Activated CD4-positive, alpha-beta T cell treated with anti-CD3 and anti-CD28 coated beads, Interleukin-2, amount 10 ng/mL, durations not matched to agents 7 days and 5 days (primary cell): ENCODE measurements at regions of chr10 and their contacts with region 1.

Region 1: DNA sequence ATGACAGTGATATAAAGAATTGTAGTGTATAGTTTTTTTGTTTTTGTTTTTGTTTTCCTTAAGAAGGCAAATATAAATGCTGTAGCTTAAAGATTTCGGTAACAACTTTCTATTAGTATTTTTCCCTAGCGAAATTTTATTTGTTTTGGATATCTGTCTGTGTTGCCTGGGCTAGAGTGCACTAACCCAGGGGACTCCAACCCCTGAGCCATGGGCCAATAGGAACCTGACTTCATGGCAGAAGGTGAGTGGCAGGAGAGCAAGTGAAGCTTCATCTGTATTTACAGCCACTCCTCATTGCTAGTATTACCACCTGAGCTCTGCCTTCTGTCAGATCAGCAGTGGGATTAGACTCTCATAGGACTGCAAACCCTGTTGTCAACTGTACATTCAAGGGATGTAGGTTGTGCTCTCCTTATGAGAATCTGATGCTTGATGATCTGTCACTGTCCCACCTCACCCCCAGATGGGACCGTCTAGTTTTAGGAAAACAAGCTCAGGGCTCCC is 65.4 kb upstream of the CCAR1 start:
- DNase-seq: no peak
- H3K4me3 Mint-ChIP-seq: no peak overlapping the region
- H3K27ac Mint-ChIP-seq: no peak overlapping the region
- H3K4me1 Mint-ChIP-seq: no peaks in the 10 kb centered on the region
- H3K27me3 Mint-ChIP-seq: no peaks in the 10 kb centered on the region

Region 2: DNA sequence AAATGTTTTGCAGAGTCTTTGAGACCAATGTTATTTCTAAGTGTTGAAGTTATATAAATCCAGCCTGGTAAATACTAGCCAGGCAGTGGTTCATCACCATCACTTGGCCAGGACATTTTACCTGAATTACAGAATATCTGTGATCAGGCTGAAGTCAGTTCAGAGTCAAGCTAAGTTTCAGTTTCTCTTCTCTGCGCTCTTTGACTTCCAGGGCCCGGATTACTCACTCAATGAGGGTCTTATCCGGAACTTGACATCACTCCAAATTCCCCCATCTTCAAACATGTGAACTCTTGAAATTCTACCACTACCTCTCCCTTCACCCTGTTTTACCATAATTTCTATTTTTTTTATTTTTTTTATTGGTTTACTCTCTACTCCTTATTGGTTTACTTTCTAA is 28.7 kb after region 1 on chr10:
- CTCF ChIA-PET with region 1: no interaction called
- POLR2A ChIA-PET with region 1: no interaction called
- DNase-seq: no peak
- H3K4me3 Mint-ChIP-seq: no peak overlapping the region
- H3K27ac Mint-ChIP-seq: peak overlapping the region; percentile 32
- H3K4me1 Mint-ChIP-seq: peaks cover 1% of the 10 kb centered on the region
- H3K27me3 Mint-ChIP-seq: no peaks in the 10 kb centered on the region

Region 3: GRCh38 chr10:68697106-68697505 is 41.4 kb after region 1 on chr10:
- CTCF ChIA-PET with region 1: no interaction called
- POLR2A ChIA-PET with region 1: interaction called, 10 read pairs
- DNase-seq: no peak
- H3K4me3 Mint-ChIP-seq: no peak overlapping the region
- H3K27ac Mint-ChIP-seq: no peak overlapping the region
- H3K4me1 Mint-ChIP-seq: no peaks in the 10 kb centered on the region
- H3K27me3 Mint-ChIP-seq: peaks cover 1% of the 10 kb centered on the region